CD4-positive, alpha-beta memory T cell (primary cell): ENCODE measurements at regions of chr10 and their contacts with region 1.

Region 1: DNA sequence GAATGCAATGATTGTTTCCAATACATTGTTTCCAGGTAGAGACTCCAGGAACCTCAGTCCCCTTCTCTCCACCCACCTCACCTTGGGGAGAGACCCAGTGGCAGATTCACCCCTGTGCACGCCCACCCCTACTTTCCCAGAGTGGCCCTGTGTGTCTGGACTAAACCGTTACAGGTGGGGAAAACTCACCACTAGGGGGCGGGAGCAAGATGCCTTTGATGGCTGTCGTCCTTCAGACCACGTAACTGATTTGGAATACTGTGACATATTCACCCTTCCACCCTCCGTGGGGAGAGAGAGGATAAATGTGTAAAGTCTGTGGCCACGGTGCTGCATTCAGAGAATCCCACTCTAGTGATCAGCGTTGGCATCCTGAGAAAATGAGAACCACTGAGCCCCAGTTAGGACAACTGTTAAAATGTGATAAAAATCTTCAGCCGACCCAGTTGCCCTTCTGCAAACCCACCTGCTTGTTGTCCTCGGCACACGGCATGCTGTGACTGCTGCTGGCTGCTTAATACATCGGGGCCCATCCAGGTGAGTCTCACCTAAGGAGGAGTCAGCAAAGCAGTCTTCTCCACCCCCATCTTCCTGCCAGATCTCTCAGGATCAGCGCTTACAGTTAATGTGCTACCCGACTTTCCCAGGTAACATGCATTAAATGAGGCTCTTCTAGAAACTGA is 41.5 kb upstream of the NMT2 start:
- DNase-seq: peak; percentile 71 to 76 (median 74)
- H3K4me3 ChIP-seq: peak overlapping the region in 1 of 2 donors; percentile 15
- H3K4me3 Mint-ChIP-seq: peak overlapping the region in 7 of 8 donors; percentile 40 to 80 (median 73)
- H3K27ac ChIP-seq: peak overlapping the region; percentile 30
- H3K27ac Mint-ChIP-seq: peak overlapping the region; percentile 81 to 99 (median 92)
- H3K4me1 ChIP-seq: peaks cover 55% of the 10 kb centered on the region
- H3K4me1 Mint-ChIP-seq: peaks cover 38 to 68% (median 51%) of the 10 kb centered on the region in 4 donors
- H3K27me3 ChIP-seq: no peaks in the 10 kb centered on the region
- H3K27me3 Mint-ChIP-seq: no peaks in the 10 kb centered on the region

Region 2: DNA sequence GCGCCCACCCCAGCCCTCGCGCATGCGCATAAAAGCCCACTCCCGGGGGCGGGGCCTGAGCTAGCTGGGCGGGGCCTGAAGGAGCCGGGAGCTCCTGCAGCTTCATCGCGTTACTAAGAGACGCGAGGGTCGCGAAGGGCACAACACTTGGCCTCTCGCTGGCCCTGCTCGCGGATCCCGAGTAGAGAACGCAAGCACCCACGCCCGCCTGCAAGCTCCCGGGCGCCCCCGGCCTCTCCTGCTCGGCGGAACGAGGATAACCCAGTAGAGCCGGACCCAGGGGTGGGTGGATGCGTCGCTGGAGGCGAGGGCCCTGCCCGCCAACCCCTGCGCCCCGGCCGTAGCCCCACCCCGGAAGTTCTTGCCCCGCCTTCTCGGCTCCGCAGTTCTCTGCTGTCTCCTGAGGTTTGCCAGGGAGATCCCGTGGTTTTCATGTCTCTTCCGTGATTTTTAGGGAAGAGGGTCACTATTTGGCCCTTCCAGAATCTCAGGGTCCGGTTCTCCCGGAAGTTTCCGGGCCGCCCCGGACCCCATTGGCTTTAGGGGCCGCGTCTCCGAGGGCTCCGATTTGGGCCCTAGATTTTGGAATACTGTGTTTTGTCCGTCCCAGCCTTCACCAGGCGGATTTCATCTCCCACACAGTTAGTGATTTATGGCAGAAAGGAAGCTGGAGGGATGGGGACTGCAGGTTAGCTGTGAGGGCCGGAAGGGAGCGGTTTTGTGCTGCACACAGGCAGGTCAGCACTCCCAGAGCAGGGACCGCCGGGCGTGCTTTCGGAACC is 250.5 kb before region 1 on chr10 and contains the start of gene MEIG1:
- CTCF ChIA-PET with region 1: no interaction called
- POLR2A ChIA-PET with region 1: no interaction called
- intact Hi-C with region 1: loop called (anchors 5 kb)
- DNase-seq: peak; percentile 87 to 92 (median 88)
- H3K4me3 ChIP-seq: peak within 1 kb of the TSS; percentile 79 to 98
- H3K4me3 Mint-ChIP-seq: peak within 1 kb of the TSS; percentile 93 to 99 (median 96)
- H3K27ac ChIP-seq: peak within 1 kb of the TSS; percentile 92
- H3K27ac Mint-ChIP-seq: peak within 1 kb of the TSS; percentile 93 to 99 (median 96)
- H3K4me1 ChIP-seq: peaks cover 14% of the 10 kb centered on the region
- H3K4me1 Mint-ChIP-seq: peaks cover 20 to 40% (median 29%) of the 10 kb centered on the region in 4 donors
- H3K27me3 ChIP-seq: no peaks in the 10 kb centered on the region
- H3K27me3 Mint-ChIP-seq: no peaks in the 10 kb centered on the region
- total RNA-seq, gene MEIG1: not detected

Region 3: DNA sequence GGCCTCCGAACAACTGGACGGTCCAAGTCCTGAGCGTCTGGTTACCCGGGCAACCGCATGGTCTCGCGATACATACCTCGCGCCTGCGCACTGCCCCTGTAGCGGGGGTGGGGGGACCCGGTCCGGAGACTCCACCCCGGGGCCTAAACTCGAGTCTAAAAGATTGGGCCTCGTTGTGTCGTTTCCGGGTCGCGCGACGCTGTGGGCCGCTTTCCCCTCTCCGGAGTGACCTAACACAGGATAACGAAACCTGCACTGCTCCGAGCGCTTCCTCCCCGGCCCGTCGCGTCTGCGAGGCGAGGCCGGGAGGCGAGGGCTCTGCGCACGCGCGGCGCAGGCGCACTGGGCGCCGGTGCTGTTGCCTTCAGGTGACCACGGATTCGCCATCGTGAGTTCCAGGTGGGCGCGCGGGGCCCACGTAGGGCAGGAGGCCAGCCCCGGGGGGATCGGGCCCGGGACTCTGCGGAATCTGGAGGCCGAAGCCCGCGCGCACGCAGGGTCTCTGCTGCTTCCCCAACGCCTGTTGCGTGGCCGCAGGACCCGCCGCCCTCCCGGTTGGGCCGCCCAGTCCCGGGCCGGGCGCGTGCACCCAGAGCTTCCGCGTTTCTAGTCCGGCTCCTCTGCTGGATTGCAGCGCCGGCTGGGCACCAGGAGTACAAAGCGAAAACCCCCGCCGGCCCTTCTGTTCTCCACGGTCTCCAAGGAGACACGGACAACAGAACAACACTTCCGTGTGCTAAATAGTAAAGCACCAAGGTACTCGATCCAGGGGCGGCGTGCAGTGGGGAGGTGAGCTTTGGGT is 112.8 kb before region 1 on chr10 and contains the start of gene RPP38:
- CTCF ChIA-PET with region 1: interaction called, 3 read pairs
- POLR2A ChIA-PET with region 1: interaction called, 3 read pairs
- intact Hi-C with region 1: loop called (anchors 2 kb)
- DNase-seq: peak; percentile 94 to 97 (median 95)
- H3K4me3 ChIP-seq: peak within 1 kb of the TSS; percentile 86 to 97
- H3K4me3 Mint-ChIP-seq: peak within 1 kb of the TSS; percentile 91 to 99 (median 96)
- H3K27ac ChIP-seq: peak within 1 kb of the TSS; percentile 95
- H3K27ac Mint-ChIP-seq: peak within 1 kb of the TSS; percentile 94 to 99 (median 98)
- H3K4me1 ChIP-seq: peaks cover 38% of the 10 kb centered on the region
- H3K4me1 Mint-ChIP-seq: peaks cover 16 to 44% (median 31%) of the 10 kb centered on the region in 4 donors
- H3K27me3 ChIP-seq: no peaks in the 10 kb centered on the region
- H3K27me3 Mint-ChIP-seq: no peaks in the 10 kb centered on the region
- total RNA-seq, gene RPP38: 19.8 to 21.8 TPM

Region 4: DNA sequence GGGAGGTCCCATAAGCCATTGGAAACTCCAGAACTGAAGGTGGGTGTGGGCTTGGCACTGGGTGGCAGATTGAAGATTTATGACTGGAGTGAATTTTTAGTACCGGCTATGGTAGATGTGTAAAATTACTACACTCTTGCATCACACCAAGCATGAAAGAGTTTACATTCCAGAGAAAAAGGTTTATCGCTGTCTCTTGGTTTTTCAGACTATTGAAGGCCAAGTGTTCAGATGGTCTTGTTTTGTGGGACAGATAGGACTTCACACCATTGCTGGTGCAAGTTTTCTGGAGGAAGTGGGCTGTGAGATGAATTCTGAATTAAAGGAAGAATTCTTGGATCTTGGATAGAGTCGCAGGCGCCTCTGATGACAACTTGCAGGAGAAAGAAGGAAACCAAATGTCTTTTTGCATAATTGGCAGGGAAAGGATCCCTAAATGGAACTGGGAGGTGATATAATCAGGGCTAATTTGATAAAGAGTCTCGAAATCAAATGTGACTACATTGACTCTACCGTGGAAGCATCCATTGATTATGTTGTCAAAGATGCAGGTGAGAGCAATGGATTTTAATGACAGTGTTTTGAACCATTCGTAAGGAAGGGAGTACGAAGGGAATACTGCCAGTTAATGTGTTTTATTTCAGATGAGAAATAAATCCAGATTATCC is 27.3 kb before region 1 on chr10:
- CTCF ChIA-PET with region 1: interaction called, 12 read pairs
- POLR2A ChIA-PET with region 1: interaction called, 21 read pairs
- intact Hi-C with region 1: no loop called
- DNase-seq: no peak
- H3K4me3 ChIP-seq: no peak overlapping the region
- H3K4me3 Mint-ChIP-seq: no peak overlapping the region
- H3K27ac ChIP-seq: no peak overlapping the region
- H3K27ac Mint-ChIP-seq: peak overlapping the region in 4 of 7 donors; percentile 14 to 56 (median 20)
- H3K4me1 ChIP-seq: peaks cover 25% of the 10 kb centered on the region
- H3K4me1 Mint-ChIP-seq: peaks cover 12 to 33% (median 21%) of the 10 kb centered on the region in 4 donors
- H3K27me3 ChIP-seq: no peaks in the 10 kb centered on the region
- H3K27me3 Mint-ChIP-seq: no peaks in the 10 kb centered on the region

Region 5: DNA sequence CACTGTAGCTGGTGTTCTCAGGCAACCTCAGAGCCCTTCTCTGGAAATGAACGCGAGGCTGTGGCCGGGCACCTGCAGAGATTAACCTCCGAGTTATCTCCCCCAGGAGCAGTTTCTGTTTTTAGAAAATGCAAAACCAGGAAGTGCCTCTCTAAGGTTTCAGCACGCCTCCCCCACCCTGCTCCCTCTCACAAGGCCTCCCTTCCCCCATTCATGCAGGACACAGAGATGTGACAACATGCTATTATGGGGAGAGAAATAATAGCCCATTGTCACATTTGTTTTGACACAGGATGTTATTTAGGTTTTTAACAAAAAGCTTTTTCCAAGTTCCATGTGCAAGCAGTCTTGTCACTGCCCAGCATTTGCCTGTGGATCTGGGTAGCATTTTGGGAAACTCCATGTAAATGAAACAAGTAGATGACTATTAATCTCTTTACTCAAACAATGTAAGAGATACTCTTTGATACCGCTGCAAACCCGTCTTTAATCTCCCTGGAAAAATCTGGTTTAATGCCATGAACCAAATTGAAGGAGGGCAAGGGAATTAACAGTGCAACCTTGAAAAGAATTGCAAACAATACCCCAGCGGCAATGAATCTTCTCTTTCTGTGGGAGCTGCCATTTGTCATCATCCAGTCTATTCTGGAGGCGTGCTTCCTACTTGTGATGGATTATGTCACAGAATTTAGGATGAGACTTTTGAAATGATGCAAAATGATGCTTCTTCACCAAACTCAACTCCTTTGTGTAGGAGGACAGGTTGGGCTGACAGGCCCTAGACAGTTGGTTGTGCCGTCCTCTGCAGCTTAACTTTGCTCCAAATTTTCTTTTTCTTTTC is 45.1 kb after region 1 on chr10:
- CTCF ChIA-PET with region 1: interaction called, 4 read pairs
- POLR2A ChIA-PET with region 1: no interaction called
- intact Hi-C with region 1: loop called (anchors 1 kb)
- DNase-seq: peak in 4 of 5 donors; percentile 6 to 18 (median 12)
- H3K4me3 ChIP-seq: peak overlapping the region; percentile 58 to 94
- H3K4me3 Mint-ChIP-seq: peak overlapping the region; percentile 90 to 99 (median 97)
- H3K27ac ChIP-seq: peak overlapping the region; percentile 43
- H3K27ac Mint-ChIP-seq: peak overlapping the region; percentile 65 to 95 (median 92)
- H3K4me1 ChIP-seq: peaks cover 28% of the 10 kb centered on the region
- H3K4me1 Mint-ChIP-seq: peaks cover 14 to 43% (median 30%) of the 10 kb centered on the region in 4 donors
- H3K27me3 ChIP-seq: no peaks in the 10 kb centered on the region
- H3K27me3 Mint-ChIP-seq: no peaks in the 10 kb centered on the region

Region 6: DNA sequence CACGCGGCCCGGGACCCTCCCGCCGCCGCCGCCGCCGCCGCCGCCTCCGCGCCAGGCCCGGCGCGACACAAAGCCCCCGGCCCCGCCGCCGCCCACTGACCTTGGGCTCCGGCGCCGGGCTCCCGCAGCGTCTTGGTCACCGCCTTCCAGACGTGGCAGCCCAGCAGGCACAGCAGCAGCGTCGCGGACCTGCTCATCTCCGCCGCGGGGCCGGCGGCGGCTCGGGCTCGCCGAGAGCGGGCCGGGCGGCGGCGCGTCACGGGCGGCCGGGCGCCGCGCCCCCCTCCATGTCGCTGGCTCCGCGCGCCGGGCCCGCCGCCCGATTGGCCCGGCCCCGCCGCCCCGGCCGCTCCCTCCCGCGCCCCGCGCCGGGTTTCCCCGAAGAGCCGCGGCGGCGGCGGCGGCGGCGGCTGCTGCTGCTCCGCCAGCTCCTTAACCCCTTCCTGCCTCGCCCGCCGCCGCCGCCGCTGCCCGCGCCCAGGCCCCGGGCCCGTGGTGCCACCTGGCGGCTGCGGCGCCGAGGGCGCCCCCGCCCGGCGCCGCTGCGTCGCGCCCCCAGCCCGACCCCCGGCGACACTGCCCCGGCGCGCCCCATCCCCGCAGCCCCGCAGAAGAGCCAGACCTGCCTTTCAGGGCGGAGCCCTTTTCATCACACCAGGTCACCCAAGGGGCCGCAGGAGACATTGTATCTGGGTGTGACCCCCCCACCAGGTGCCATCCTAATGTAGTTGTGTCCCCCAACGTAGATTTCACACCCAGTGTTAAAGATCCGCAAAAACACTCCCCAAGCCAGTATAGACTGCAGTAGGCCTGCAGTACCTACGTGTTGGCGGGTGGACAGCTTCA is 161.1 kb after region 1 on chr10 and contains the start of gene FAM171A1:
- CTCF ChIA-PET with region 1: no interaction called
- POLR2A ChIA-PET with region 1: interaction called, 3 read pairs
- intact Hi-C with region 1: loop called (anchors 1 kb)
- DNase-seq: peak; percentile 60 to 69 (median 68)
- H3K4me3 ChIP-seq: peak within 1 kb of the TSS in 1 of 2 donors; percentile 29
- H3K4me3 Mint-ChIP-seq: peak within 1 kb of the TSS; percentile 74 to 86 (median 80)
- H3K27ac ChIP-seq: no peak within 1 kb of the TSS
- H3K27ac Mint-ChIP-seq: peak within 1 kb of the TSS; percentile 35 to 88 (median 68)
- H3K4me1 ChIP-seq: peaks cover 10% of the 10 kb centered on the region
- H3K4me1 Mint-ChIP-seq: peaks cover 1 to 25% (median 11%) of the 10 kb centered on the region in 4 donors
- H3K27me3 ChIP-seq: no peaks in the 10 kb centered on the region
- H3K27me3 Mint-ChIP-seq: peaks cover 7 to 9% of the 10 kb centered on the region in 2 donors
- total RNA-seq, gene FAM171A1: 7.1 to 8.0 TPM